Posterior vena cava (tissue), 2 donors: ENCODE measurements at regions of chr2 and their contacts with region 1.

Region 1: DNA sequence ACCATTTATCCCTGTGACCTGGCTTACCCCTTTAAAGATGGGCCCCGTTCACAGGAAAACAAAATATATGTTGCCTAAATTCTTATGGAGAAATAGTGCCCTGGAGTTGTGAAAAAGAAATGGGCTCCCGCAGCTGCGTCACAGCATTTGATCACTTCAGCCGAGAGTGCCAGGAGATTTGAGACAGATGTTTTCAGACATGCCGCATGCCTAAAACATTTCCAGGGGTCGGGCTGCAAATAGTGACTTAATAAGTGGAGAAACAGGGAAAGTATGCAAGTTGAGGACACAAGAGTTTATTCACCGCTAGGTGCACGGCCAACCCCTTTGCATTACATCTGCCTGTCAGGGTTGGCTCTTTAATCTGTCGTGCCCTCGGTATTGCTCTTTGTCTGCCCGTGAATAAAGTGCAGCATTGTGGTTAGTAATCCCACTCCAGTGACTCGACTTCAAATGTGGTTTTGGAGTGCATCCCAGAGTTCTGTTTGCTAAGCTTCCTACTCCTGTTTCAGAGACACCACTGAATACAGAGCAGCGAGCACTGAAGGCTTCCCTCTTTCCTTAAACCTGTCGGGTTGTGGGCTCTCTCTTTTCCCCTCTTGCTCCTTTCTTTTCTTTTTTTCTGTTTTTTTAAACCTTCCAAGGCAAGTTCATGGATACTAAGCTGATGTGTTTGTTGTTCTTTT is 187.5 kb downstream of the LTBP1 start:
- DNase-seq: peak; percentile 86

Region 2: DNA sequence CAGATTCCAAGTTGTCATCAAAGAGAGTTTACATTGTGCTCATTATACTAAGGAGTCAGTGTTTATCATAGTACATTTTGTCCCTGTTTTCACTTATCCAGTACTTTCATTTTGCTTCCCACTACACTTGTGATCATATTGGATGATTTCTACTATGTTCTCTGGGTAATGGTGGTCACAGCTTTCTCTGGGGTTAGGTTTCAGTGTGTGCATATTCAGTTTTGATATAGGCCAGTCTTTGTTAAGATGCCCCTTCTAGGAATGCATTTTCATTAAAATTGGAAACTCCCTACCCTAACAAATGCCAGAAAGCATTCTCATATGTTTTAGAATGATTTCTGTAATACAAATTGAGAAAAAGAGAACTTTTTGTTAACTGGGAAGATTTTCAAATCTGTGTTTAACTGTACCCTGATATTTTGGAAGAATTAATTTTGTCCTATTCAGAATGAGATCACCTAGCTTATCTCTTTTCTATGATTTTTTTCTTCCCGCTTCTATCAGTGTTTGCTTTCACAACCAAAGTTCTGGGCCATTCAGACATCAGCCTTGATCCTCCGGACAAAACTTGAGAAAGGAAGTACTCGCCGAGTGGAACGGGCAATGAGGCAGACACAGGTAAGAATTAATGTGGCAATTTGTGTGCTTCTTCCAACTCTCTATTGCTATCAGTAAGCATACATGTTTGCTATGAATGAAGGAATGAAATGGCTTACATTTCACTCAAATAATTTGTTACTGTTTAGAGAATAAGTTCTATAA is 431.7 kb before region 1 on chr2:
- intact Hi-C with region 1: no loop called
- DNase-seq: no peak

Region 3: GRCh38 chr2:33275689-33276444 is 141.6 kb after region 1 on chr2:
- intact Hi-C with region 1: loop called in 1 of 2 experiments (anchors 10 kb)
- DNase-seq: no peak

Region 4: GRCh38 chr2:34519659-34520058 is 1385.4 kb after region 1 on chr2:
- intact Hi-C with region 1: loop called in 1 of 2 experiments (anchors 10 kb)
- DNase-seq: no peak